ENCODE measurements at regions of chr15 and their contacts with region 1.

Region 1: DNA sequence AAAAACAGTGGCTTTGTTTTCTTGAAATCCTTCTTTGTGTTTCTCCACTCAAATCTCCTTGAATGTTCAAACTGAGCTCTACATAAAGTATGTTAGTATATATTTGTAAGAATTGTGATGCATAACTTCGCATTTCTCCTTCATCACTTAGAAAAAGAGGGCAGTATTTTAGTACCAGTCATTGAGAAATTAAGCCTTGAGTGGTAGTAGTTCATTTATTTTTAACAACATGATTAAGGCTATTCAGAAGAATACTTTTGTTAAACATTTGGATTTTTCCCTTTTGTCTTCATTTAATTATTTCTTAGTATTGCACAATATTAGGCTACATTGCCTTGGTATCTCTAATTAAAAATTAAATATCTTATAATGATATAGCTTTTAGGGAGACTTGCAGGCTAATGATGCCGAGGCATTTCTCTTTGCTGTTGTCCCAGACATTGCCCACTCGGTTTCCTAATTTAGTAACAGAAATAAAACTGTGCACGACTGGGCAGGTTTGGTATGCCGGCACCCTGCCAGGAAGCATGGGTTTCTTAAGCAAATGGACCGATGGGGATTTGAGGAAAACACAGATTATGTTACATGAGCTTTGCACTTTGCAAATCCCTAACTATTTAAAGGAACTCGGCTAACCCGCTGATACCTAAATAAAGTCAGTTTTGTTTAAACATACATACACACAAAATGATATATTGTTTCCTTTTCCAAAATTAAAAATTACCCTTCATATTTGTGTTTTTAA is 54.7 kb downstream of the LRRC28 start:
- DNase-seq: peak; percentile 87 to 92
- ATAC-seq: peak; percentile 56
- H3K4me3 ChIP-seq: no peak overlapping the region
- H3K27ac ChIP-seq: no peak overlapping the region
- H3K4me1 ChIP-seq: peaks cover 3 to 4% of the 10 kb centered on the region in 2 donors
- H3K27me3 ChIP-seq: no peaks in the 10 kb centered on the region

Region 2: GRCh38 chr15:99207672-99208071 is 98.3 kb before region 1 on chr15:
- intact Hi-C with region 1: no loop called
- DNase-seq: no peak
- ATAC-seq: no peak
- H3K4me3 ChIP-seq: no peak overlapping the region
- H3K27ac ChIP-seq: no peak overlapping the region
- H3K4me1 ChIP-seq: no peaks in the 10 kb centered on the region
- H3K27me3 ChIP-seq: no peaks in the 10 kb centered on the region

Region 3: DNA sequence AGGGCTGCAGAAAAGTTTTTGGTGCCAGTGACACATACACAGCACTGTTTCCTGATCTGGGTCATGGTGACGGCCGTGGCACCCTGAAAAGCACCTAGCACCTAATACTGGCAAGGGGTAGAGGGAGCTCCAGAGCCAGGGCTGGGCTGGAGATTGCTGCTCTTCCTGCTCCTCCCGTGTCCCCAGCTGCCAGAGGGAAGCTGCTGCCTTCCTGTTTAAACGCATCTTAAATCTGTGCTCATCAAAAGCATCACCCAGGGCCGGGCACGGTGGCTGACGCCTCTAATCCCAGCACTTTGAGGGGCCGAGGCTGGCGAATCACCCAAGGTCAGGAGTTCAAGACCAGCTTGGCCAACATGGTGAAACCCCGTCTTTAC is 103.2 kb after region 1 on chr15:
- intact Hi-C with region 1: loop called in 1 of 2 experiments (anchors 5 kb)
- DNase-seq: peak; percentile 78 to 83
- ATAC-seq: peak; percentile 69
- H3K4me3 ChIP-seq: no peak overlapping the region
- H3K27ac ChIP-seq: peak overlapping the region; percentile 9 to 58
- H3K4me1 ChIP-seq: no peaks in the 10 kb centered on the region
- H3K27me3 ChIP-seq: no peaks in the 10 kb centered on the region

Region 4: DNA sequence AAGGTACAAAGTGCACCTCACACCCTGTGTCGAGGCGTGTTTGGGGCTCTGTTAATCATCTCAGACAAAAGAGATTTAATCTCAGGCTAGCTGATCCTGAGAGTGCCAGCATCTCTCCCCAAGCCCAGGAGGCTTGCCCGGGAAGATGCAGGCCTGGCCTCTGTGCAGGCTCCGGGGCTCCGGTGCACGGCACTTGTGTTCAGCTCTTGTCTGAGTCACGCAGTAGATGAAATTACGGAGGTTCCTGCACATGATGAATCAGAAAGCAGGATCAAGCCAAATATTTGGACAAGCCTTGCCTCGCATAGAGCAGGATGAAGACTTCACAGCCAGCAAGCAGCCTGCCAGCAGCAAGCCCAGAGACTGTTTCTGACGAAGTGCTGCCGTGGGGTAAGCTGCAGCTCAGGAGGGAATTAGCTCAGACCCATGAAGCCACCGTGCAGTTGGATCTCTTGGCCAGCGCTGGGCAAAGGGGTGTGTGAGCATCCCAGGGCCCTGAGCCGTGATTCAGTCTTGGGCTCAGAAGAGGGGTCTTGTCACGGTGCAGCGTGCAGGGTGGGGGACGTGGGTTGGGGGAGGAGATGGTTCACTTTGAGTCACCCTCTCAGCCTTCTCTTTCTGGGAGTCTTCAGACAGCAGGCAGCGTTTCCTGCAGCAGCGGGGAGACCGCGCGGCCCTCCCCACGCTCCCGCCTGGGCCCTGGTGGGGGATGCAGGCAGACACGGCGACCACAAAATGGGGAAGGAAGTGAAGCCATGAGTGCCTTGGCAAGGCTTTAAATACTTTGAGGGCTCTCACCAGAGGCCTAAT is 170.7 kb after region 1 on chr15:
- intact Hi-C with region 1: loop called in 1 of 2 experiments (anchors 10 kb)
- DNase-seq: peak; percentile 89 to 91
- ATAC-seq: peak; percentile 82
- H3K4me3 ChIP-seq: no peak overlapping the region
- H3K27ac ChIP-seq: peak overlapping the region in 1 of 2 donors; percentile 14
- H3K4me1 ChIP-seq: no peaks in the 10 kb centered on the region
- H3K27me3 ChIP-seq: no peaks in the 10 kb centered on the region